AG04449 (cell line): ENCODE measurements at regions of chr5 and their contacts with region 1.

Region 1: GRCh38 chr5:154520861-154521453 is 42.9 kb upstream of the HAND1 start:
- DNase-seq: no peak
- H3K4me3 ChIP-seq: no peak overlapping the region
- CTCF ChIP-seq: peak; percentile 66

Region 2: GRCh38 chr5:154498994-154499393 is 22.0 kb before region 1 on chr5:
- CTCF ChIA-PET with region 1: interaction called, 15 read pairs
- POLR2A ChIA-PET with region 1: no interaction called
- DNase-seq: no peak
- H3K4me3 ChIP-seq: no peak overlapping the region
- CTCF ChIP-seq: no peak

Region 3: DNA sequence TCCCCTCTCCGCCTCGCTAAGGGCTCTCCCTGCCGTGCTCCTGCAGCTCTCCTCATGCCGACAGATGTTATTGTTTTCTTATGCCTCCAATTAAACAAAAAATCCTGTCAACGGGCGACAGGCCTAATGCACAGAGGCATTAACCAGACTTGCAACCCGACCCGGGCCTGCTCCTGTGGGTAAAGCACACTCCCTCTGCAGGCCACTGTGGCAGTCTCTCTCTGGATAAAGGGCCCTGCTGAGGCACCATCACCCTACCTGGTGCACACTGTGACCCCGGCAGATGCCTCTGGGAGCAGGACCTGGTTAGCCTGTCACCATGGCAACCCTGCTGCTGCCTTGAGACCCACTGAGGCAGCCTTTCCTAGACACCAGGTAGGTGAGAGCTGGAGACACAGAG is 15.3 kb before region 1 on chr5:
- CTCF ChIA-PET with region 1: interaction called, 33 read pairs
- POLR2A ChIA-PET with region 1: no interaction called
- DNase-seq: no peak
- H3K4me3 ChIP-seq: no peak overlapping the region
- CTCF ChIP-seq: no peak

Region 4: DNA sequence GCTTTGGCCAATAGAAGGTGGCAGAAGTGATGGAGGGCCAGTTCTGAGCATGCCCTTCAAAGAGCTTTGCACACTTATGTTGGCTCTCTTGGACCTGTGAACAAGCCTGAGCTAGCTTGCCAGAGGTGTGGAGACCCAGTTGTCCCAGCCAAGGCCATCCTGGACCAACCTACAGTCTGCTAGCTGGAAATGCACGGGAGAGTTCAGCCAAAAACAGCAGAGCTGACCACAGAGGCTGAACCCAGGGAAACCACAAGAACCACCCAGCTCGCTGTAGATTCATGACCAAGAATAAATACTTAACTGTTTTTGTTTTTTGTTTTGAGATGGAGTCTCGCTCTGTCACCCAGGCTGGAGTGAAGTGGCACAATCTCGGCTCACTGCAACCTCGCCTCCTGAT is 22.4 kb after region 1 on chr5:
- CTCF ChIA-PET with region 1: interaction called, 12 read pairs
- POLR2A ChIA-PET with region 1: no interaction called
- DNase-seq: no peak
- H3K4me3 ChIP-seq: no peak overlapping the region
- CTCF ChIP-seq: no peak